Stomach (tissue), 19 donors: ENCODE measurements at regions of chr1 and their contacts with region 1.

Region 1: DNA sequence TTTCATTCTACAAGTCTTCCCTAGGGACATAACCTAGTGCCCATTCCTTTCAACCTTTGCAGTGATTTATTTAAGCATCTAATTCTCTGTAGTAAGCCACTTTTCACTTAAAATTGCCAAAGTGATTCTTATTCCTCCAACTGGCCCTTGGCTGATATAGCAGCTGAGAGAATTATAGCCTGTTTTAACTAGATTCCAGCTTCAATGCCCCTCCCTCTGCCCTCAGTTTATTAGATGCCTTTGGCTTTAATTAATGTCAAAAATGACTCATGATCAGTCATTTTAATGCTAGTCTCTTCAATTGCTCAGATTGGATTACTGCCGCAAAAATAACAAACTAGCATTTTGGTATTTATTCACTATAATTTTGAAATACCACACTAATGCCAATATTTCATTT is 145.4 kb upstream of the KCTD3 start:
- DNase-seq: no peak
- H3K4me3 ChIP-seq: no peak overlapping the region
- H3K27ac ChIP-seq: no peak overlapping the region
- H3K4me1 ChIP-seq: no peaks in the 10 kb centered on the region
- H3K27me3 ChIP-seq: no peaks in the 10 kb centered on the region
- CTCF ChIP-seq: no peak
- EP300 ChIP-seq: no peak
- POLR2A ChIP-seq: no peak

Region 2: GRCh38 chr1:214303141-214303930 is 1118.4 kb before region 1 on chr1:
- intact Hi-C with region 1: loop called (anchors 10 kb)
- DNase-seq: peak in 1 of 2 donors; percentile 32
- H3K4me3 ChIP-seq: peak overlapping the region in 1 of 4 donors; percentile 2
- H3K27ac ChIP-seq: no peak overlapping the region
- H3K4me1 ChIP-seq: peaks cover 0 to 8% (median 0%) of the 10 kb centered on the region in 4 donors
- H3K27me3 ChIP-seq: no peaks in the 10 kb centered on the region
- CTCF ChIP-seq: no peak
- EP300 ChIP-seq: no peak
- POLR2A ChIP-seq: no peak

Region 3: GRCh38 chr1:215526553-215527151 is 104.9 kb after region 1 on chr1:
- intact Hi-C with region 1: no loop called
- DNase-seq: peak in 1 of 2 donors; percentile 75
- H3K4me3 ChIP-seq: no peak overlapping the region
- H3K27ac ChIP-seq: no peak overlapping the region
- H3K4me1 ChIP-seq: no peaks in the 10 kb centered on the region
- H3K27me3 ChIP-seq: no peaks in the 10 kb centered on the region
- CTCF ChIP-seq: peak in 5 of 7 experiments; percentile 39 to 72 (median 63)
- EP300 ChIP-seq: no peak
- POLR2A ChIP-seq: no peak